A673 (cell line): ENCODE measurements at regions of chr7 and their contacts with region 1.

Region 1: GRCh38 chr7:33895025-33895804 is 10.1 kb upstream of the BMPER start:
- DNase-seq: peak; percentile 89
- H3K4me3 ChIP-seq: no peak overlapping the region
- H3K27ac ChIP-seq: no peak overlapping the region
- H3K4me1 ChIP-seq: no peaks in the 10 kb centered on the region
- H3K27me3 ChIP-seq: no peaks in the 10 kb centered on the region
- CTCF ChIP-seq: peak; percentile 95

Region 2: GRCh38 chr7:33562996-33563395 is 332.2 kb before region 1 on chr7:
- CTCF ChIA-PET with region 1: no interaction called
- POLR2A ChIA-PET with region 1: no interaction called
- intact Hi-C with region 1: no loop called
- DNase-seq: no peak
- H3K4me3 ChIP-seq: no peak overlapping the region
- H3K27ac ChIP-seq: no peak overlapping the region
- H3K4me1 ChIP-seq: no peaks in the 10 kb centered on the region
- H3K27me3 ChIP-seq: no peaks in the 10 kb centered on the region
- CTCF ChIP-seq: no peak

Region 3: GRCh38 chr7:33757562-33758165 is 137.6 kb before region 1 on chr7:
- CTCF ChIA-PET with region 1: interaction called, 3 read pairs
- POLR2A ChIA-PET with region 1: no interaction called
- intact Hi-C with region 1: loop called (anchors 2 kb)
- DNase-seq: peak; percentile 68
- H3K4me3 ChIP-seq: no peak overlapping the region
- H3K27ac ChIP-seq: no peak overlapping the region
- H3K4me1 ChIP-seq: peaks cover 32% of the 10 kb centered on the region
- H3K27me3 ChIP-seq: no peaks in the 10 kb centered on the region
- CTCF ChIP-seq: peak; percentile 69

Region 4: GRCh38 chr7:33814400-33814799 is 80.8 kb before region 1 on chr7:
- CTCF ChIA-PET with region 1: no interaction called
- POLR2A ChIA-PET with region 1: no interaction called
- intact Hi-C with region 1: no loop called
- DNase-seq: no peak
- H3K4me3 ChIP-seq: no peak overlapping the region
- H3K27ac ChIP-seq: no peak overlapping the region
- H3K4me1 ChIP-seq: no peaks in the 10 kb centered on the region
- H3K27me3 ChIP-seq: no peaks in the 10 kb centered on the region
- CTCF ChIP-seq: no peak